H1 (cell line): ENCODE measurements at regions of chr1 and their contacts with region 1.

Region 1: GRCh38 chr1:26583646-26584485 is 54.3 kb downstream of the RPS6KA1 start:
- DNase-seq: peak; percentile 10 to 65
- H3K4me3 ChIP-seq: no peak overlapping the region
- H3K27ac ChIP-seq: no peak overlapping the region
- H3K4me1 ChIP-seq: no peaks in the 10 kb centered on the region
- H3K27me3 ChIP-seq: no peaks in the 10 kb centered on the region
- CTCF ChIP-seq: peak; percentile 71 to 86 (median 73)
- EP300 ChIP-seq: no peak
- POLR2A ChIP-seq: no peak
- RAD21 ChIP-seq: peak; percentile 74 to 81

Region 2: DNA sequence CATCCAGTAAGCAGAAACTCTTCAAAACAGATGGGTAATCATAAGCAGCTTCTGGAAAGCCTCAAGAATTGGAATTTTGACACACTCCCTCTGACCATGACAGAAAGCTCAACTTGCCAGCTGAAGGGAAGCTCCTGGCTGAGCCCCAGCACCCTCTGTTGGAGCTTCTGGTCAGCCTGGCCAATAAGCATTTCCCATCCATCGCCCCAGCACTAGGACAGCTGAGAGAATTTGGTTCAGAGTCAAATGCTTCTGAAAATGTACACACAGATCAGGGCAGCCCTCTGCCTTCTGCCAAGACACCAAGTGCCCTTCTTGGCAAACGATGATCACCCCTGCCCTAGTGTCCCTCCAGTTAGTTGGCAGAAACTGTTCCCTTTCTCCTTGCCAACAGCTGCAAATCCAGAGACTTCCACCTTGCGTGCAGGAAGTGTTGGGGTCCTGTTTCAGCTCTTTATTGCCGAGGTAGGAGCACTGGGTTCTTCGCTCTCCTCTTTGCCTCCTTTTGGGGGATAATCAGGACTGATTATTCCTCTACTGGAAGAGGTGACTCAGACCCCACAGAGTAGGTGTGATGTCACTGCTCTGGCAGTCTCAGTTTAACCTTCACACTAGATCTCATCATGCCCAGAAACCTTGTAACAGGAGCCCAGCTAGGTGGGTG is 215.7 kb after region 1 on chr1:
- CTCF ChIA-PET with region 1: interaction called, 13 read pairs
- POLR2A ChIA-PET with region 1: no interaction called
- DNase-seq: no peak
- H3K4me3 ChIP-seq: no peak overlapping the region
- H3K27ac ChIP-seq: no peak overlapping the region
- H3K4me1 ChIP-seq: peaks cover 3 to 12% (median 5%) of the 10 kb centered on the region in 4 experiments; a peak in 4 of 7 replicates
- H3K27me3 ChIP-seq: no peaks in the 10 kb centered on the region
- CTCF ChIP-seq: no peak
- EP300 ChIP-seq: no peak
- POLR2A ChIP-seq: no peak
- RAD21 ChIP-seq: no peak